K562 (cell line): ENCODE measurements at regions of chr7 and their contacts with region 1.

Region 1: DNA sequence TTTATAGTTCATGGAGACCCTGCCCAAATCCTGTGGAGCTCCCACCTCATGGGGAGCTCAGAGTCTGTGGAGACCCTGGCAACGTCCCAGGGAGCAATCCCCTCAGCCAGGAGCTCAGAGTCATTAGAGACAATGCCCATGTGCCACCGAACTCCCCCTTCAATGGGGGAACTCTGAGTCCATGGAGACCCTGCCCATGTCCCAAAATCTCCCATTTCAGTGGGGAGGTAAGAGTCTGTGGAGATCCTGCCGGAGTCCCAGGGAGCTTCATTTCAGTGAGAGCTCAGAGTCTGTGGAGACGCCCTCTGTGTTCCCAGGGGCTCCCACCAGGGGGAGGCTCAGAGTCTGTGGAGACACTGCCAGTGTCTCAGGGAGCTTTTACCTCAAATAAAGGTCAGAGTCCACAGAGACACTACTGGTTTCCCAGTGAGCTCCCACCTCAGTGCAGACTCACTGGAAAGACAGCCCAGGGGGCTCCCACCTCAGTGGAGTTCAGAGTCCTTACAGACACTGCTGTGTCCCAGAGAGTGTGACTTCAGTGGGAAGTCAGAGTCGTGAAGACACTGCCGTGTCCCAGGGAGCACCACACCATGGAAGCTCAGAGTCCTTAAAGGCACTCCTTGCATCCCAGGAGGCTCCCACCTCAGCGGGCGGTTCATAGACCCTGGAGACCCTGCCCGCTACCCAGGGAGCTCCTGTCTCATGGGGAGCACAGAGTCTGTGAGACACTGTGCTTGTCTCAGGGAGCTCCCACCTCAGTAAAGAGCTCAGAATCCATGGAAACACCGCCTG is 5.0 kb downstream of the MYO1G start:
- DNase-seq: peak; percentile 65 to 85 (median 74)
- ATAC-seq: peak; percentile 94
- H3K4me3 ChIP-seq: no peak overlapping the region
- H3K27ac ChIP-seq: no peak overlapping the region; the same call in 2 of the 3 replicates
- H3K4me1 ChIP-seq: peaks cover 21 to 55% of the 10 kb centered on the region in 2 experiments; a peak in 4 of 5 replicates
- H3K27me3 ChIP-seq: no peaks in the 10 kb centered on the region
- CTCF ChIP-seq: peak; percentile 85 to 96 (median 94)
- EP300 ChIP-seq: no peak
- POLR2A ChIP-seq: no peak
- RAD21 ChIP-seq: peak; percentile 85 to 93

Region 2: DNA sequence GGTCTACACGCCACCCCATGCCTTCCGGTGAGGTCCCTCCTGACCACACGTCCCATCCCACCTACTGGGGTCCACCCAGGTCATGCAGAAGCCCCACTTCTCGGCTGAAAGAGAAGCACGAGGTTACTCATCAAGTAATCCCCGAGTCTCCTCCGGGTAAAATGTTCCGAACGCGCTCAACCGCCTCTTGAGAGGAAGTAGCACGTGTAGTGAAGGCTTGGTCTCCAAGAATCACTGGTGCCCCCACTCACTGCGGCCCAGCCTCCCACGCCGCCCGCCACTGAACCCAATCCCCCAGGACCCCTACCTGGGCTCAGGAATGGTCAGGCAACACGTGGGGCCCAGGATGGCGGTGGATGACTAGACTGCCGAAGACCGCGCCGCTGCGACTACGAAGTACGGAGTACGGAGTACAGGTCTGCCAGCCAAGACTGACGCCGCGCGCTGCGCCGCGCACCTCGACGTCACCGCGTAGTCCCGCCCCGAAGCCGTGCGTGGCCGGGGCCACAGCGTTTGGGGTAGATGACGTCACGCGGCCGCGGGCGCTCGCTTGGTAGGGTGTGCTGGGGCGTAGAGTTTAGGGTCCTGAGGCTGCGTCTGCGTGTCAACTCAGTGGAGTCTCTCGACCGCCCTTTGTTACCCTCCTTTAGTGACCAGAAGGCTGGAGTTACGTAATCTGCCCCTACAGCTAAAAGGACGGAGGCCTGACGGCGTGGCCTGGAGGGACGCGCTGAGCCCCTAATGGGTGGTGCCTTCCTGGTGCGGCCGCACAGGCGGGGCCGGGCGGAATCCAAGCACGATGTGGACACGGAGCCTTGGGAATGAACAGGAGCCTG is 12.6 kb after region 1 on chr7:
- CTCF ChIA-PET with region 1: no interaction called
- POLR2A ChIA-PET with region 1: interaction called, 141 read pairs
- in situ Hi-C with region 1: no loop called
- intact Hi-C with region 1: no loop called
- DNase-seq: peak; percentile 81 to 98 (median 86)
- ATAC-seq: peak; percentile 85
- H3K4me3 ChIP-seq: peak overlapping the region; percentile 98
- H3K27ac ChIP-seq: peak overlapping the region; percentile 97
- H3K4me1 ChIP-seq: peaks cover 22 to 38% of the 10 kb centered on the region in 2 experiments; a peak in 4 of 5 replicates
- H3K27me3 ChIP-seq: no peaks in the 10 kb centered on the region
- CTCF ChIP-seq: no peak
- EP300 ChIP-seq: no peak; the same call in none of the 2 replicates
- POLR2A ChIP-seq: peak; percentile 99
- RAD21 ChIP-seq: 0 out of 4 replicates have a peak, but pooled peaks of 1 of the 2 experiments have one; percentile 6

Region 3: GRCh38 chr7:45073786-45074527 is 100.2 kb after region 1 on chr7:
- CTCF ChIA-PET with region 1: no interaction called
- POLR2A ChIA-PET with region 1: no interaction called
- in situ Hi-C with region 1: no loop called
- intact Hi-C with region 1: loop called (anchors 10 kb)
- DNase-seq: no peak
- ATAC-seq: no peak
- H3K4me3 ChIP-seq: no peak overlapping the region
- H3K27ac ChIP-seq: no peak overlapping the region
- H3K4me1 ChIP-seq: peaks cover 0 to 18% of the 10 kb centered on the region in 2 experiments; a peak in 1 of 5 replicates
- H3K27me3 ChIP-seq: no peaks in the 10 kb centered on the region
- CTCF ChIP-seq: no peak
- EP300 ChIP-seq: no peak
- POLR2A ChIP-seq: no peak
- RAD21 ChIP-seq: no peak

Region 4: GRCh38 chr7:45136106-45137060 is 162.6 kb after region 1 on chr7:
- CTCF ChIA-PET with region 1: interaction called, 27 read pairs
- POLR2A ChIA-PET with region 1: interaction called, 17 read pairs
- in situ Hi-C with region 1: loop called (anchors 5 kb)
- intact Hi-C with region 1: loop called (anchors 1 kb)
- DNase-seq: peak; percentile 75 to 86 (median 76)
- ATAC-seq: peak; percentile 74
- H3K4me3 ChIP-seq: no peak overlapping the region
- H3K27ac ChIP-seq: no peak overlapping the region
- H3K4me1 ChIP-seq: peaks cover 5 to 15% of the 10 kb centered on the region in 2 experiments
- H3K27me3 ChIP-seq: no peaks in the 10 kb centered on the region
- CTCF ChIP-seq: peak; percentile 84 to 96 (median 87)
- EP300 ChIP-seq: 0 out of 2 replicates have a peak, but pooled peaks have one; percentile 13
- POLR2A ChIP-seq: no peak
- RAD21 ChIP-seq: peak; percentile 96

Region 5: DNA sequence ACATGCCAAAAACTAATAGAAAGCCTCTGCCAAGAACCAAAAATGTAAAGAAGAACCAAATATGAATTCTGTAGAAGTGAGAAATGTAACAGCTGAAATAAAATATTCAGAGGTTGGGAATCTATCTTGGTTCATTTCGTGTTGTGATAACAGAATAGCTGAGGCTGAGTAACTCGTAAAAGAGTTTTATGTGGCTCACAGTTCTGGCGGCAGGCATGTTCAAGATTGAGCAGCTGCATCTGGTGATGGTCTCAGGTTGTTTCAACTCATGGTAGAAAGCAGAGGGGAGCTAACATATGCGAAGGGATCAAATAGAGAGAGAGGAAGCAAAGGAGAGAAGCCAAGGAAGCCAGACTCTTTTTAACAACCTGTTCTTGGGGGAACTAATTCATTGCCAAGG is 1890.9 kb after region 1 on chr7:
- CTCF ChIA-PET with region 1: no interaction called
- POLR2A ChIA-PET with region 1: no interaction called
- in situ Hi-C with region 1: no loop called
- intact Hi-C with region 1: no loop called
- DNase-seq: no peak
- ATAC-seq: no peak
- H3K4me3 ChIP-seq: no peak overlapping the region
- H3K27ac ChIP-seq: no peak overlapping the region
- H3K4me1 ChIP-seq: no peaks in the 10 kb centered on the region
- H3K27me3 ChIP-seq: no peaks in the 10 kb centered on the region
- CTCF ChIP-seq: no peak
- EP300 ChIP-seq: no peak
- POLR2A ChIP-seq: no peak
- RAD21 ChIP-seq: no peak